ENCODE measurements at regions of chr11 and their contacts with region 1.

Region 1: GRCh38 chr11:60871378-60872061 is 4.2 kb downstream of the ZP1 start:
- DNase-seq: no peak
- CTCF ChIP-seq: no peak

Region 2: GRCh38 chr11:60899046-60899936 is 27.8 kb after region 1 on chr11:
- CTCF ChIA-PET with region 1: interaction called, 24 read pairs
- POLR2A ChIA-PET with region 1: no interaction called
- DNase-seq: peak; percentile 58
- CTCF ChIP-seq: peak; percentile 89

Region 3: GRCh38 chr11:61161190-61162091 is 289.9 kb after region 1 on chr11 and contains the start of gene VPS37C:
- CTCF ChIA-PET with region 1: no interaction called
- POLR2A ChIA-PET with region 1: no interaction called
- DNase-seq: peak; percentile 96
- CTCF ChIP-seq: peak; percentile 3

Measured in GM10248 (cell line).